ENCODE measurements at regions of chr20 and their contacts with region 1.

Region 1: GRCh38 chr20:41411391-41411847 is 44.8 kb upstream of the EMILIN3 start:
- DNase-seq: no peak
- ATAC-seq: peak; percentile 75

Region 2: DNA sequence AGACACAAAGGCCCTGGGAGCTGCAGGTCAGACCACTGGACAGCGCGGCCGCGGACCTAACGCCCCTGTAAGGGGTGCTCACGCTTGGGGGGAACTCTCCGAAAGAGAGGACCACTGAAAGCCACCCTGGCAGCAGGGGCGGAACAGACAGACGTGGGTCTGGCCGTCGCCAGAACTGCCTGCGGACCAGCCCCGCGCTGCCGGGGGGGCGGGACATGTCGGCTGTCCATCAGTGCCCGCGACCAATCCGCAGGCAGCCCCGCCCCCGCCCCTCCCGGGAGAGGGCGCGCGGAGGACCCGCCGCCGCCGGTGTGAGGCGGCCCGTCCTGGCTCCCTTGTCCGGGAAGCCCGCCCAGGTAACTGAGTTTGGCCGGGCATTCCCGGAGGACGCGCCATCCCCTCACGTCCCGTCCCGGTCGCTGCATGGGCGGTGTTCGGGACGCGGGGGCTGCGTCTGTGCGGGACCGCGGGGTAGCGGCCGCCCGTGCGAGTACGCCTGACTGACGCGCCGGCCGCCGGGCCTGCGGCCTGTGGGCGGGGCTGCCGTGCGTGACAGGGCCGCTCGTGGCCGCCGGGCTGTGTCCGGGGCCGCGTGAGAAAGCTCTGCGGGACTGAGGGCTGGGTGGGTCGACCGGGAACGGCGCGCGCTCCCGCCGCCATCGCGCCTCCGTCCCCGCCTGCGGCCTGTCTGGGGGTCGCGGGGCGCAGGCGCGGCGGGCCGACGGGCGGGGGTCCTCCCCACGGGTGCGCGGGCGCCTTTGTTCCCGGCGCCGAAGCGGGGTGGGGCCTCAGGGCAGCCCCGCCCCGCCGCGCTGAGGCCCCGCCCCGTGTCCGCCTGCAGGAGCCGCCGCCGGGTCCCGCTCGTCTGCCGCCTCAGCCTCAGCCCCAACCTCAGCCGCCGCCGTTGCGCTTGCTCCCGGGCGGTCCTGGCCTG is 274.5 kb before region 1 on chr20 and contains the start of gene PLCG1:
- intact Hi-C with region 1: loop called (anchors 10 kb)
- DNase-seq: peak; percentile 94
- ATAC-seq: peak; percentile 91
- total RNA-seq, gene PLCG1: 45.0 TPM

Measured in Right ventricle myocardium superior (tissue), 1 donor.